ENCODE measurements at regions of chr4 and their contacts with region 1.

Region 1: DNA sequence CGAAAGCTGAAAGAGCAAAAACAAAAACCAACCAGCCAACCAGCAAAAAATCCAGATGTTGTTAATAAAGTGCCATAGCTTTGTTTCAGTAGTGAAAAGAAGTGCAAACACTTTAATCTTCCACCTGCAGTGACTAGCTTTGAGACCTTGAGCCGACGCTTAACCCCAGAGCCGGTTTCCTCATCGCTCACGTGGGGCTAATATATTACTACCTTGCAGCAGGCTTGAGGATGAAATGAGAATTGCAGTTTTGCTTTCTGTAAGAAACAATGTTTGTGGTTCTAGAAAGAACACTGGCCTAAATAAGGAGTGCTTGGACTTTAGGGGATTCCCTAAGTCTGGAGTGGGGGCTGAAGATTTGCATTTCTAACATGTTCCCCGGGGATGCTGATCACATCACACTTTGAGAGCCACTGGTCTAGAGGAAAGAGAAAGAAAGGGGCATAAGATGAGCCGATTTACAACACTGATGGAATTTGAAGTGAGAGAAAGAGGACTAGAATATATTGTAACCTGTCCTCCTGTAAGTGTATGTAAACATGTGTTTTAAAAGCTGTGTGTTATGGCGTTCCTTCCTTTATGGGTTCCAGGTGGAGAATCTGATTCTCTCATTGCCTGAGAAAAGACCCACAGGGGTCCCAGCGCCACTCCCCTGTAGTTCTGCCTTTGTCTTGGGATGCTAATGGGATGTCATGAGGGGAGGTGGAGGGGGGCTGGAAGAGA is 1.4 kb downstream of the FGF2 start:
- DNase-seq: no peak
- ATAC-seq: peak; percentile 20 to 67 (median 42)
- H3K4me3 ChIP-seq: peak overlapping the region; percentile 74 to 87 (median 80)
- H3K27ac ChIP-seq: peak overlapping the region in 9 of 10 donors; percentile 72 to 89 (median 83)
- H3K4me1 ChIP-seq: peaks cover 0 to 27% (median 11%) of the 10 kb centered on the region in 9 donors
- H3K27me3 ChIP-seq: peaks cover 0 to 66% (median 0%) of the 10 kb centered on the region in 7 donors
- CTCF ChIP-seq: peak in 3 of 9 donors; percentile 6 to 22 (median 17)

Region 2: DNA sequence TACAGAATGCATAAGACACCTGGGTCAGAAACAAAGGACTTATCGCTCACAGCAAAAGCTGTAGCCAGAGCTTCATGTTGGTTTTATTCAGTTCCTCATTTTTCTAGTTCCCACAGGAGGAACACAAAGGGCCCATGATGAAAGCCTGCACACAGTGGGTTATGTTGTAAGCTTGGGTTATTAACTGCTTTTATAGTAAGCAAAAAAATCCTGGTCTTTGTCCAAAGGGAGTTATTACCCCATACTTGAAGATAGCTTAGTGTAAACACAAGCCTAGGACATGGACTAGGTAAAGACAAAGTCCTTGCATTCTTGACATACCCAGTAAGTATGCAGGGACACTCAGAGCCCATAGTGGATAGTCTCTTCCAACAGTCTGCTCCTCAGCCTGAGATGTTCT is 83.8 kb before region 1 on chr4:
- intact Hi-C with region 1: loop called in 1 of 10 experiments (anchors 10 kb)
- DNase-seq: no peak
- ATAC-seq: peak in 2 of 8 donors; percentile 33 to 34
- H3K4me3 ChIP-seq: no peak overlapping the region
- H3K27ac ChIP-seq: no peak overlapping the region
- H3K4me1 ChIP-seq: peaks cover 0 to 36% (median 0%) of the 10 kb centered on the region in 9 donors
- H3K27me3 ChIP-seq: no peaks in the 10 kb centered on the region
- CTCF ChIP-seq: no peak

Region 3: GRCh38 chr4:122764821-122765215 is 63.2 kb before region 1 on chr4:
- intact Hi-C with region 1: loop called in 4 of 10 experiments (anchors 5 to 10 kb)
- DNase-seq: no peak
- ATAC-seq: no peak
- H3K4me3 ChIP-seq: no peak overlapping the region
- H3K27ac ChIP-seq: peak overlapping the region in 1 of 10 donors; percentile 0
- H3K4me1 ChIP-seq: peaks cover 0 to 24% (median 15%) of the 10 kb centered on the region in 9 donors
- H3K27me3 ChIP-seq: no peaks in the 10 kb centered on the region
- CTCF ChIP-seq: no peak

Region 4: GRCh38 chr4:122890142-122890769 is 62.2 kb after region 1 on chr4:
- intact Hi-C with region 1: loop called in 1 of 10 experiments (anchors 5 kb)
- DNase-seq: no peak
- ATAC-seq: peak in 2 of 8 donors; percentile 24 to 31
- H3K4me3 ChIP-seq: no peak overlapping the region
- H3K27ac ChIP-seq: peak overlapping the region in 6 of 10 donors; percentile 13 to 54 (median 30)
- H3K4me1 ChIP-seq: peaks cover 0 to 13% (median 2%) of the 10 kb centered on the region in 9 donors
- H3K27me3 ChIP-seq: no peaks in the 10 kb centered on the region
- CTCF ChIP-seq: no peak

Region 5: DNA sequence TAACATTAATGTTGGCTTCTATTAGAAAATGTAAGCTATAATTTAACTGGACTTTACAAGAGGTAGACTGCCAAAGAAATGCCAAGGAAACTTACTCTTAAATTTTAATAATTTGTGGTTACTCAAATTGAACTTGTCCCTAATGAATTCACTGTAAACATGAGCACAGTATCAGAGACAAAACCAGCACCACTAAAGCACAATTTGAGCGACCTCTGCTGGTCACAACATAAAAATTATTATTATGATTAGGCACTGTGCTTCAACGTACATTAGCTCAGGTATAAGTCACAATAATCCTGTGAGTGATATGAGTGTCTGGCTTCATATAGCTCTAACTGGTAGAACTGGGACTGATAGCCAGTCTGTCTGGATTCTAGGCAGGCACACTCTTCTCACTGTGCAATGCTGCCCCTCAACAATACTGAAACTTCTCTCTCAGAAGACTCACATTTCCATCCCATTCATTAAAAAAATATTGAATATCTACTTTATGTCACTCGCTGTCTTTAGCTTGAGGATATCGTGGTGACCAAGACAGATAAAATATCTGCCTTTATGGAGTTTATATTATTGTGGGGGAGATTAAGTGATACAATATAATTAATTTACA is 86.4 kb after region 1 on chr4:
- intact Hi-C with region 1: loop called in 2 of 10 experiments (anchors 5 to 10 kb)
- DNase-seq: no peak
- ATAC-seq: peak in 6 of 8 donors; percentile 55 to 73 (median 56)
- H3K4me3 ChIP-seq: no peak overlapping the region
- H3K27ac ChIP-seq: no peak overlapping the region
- H3K4me1 ChIP-seq: no peaks in the 10 kb centered on the region
- H3K27me3 ChIP-seq: no peaks in the 10 kb centered on the region
- CTCF ChIP-seq: peak in 7 of 9 donors; percentile 12 to 57 (median 52)

Region 6: GRCh38 chr4:122922877-122923511 is 95.0 kb after region 1 on chr4:
- intact Hi-C with region 1: loop called in 3 of 10 experiments (anchors 5 to 10 kb)
- DNase-seq: peak; percentile 82 to 86
- ATAC-seq: peak; percentile 96 to 99 (median 98)
- H3K4me3 ChIP-seq: peak overlapping the region; percentile 64 to 95 (median 92)
- H3K27ac ChIP-seq: peak overlapping the region in 9 of 10 donors; percentile 69 to 90 (median 82)
- H3K4me1 ChIP-seq: peaks cover 0 to 25% (median 17%) of the 10 kb centered on the region in 9 donors
- H3K27me3 ChIP-seq: no peaks in the 10 kb centered on the region
- CTCF ChIP-seq: peak in 1 of 9 donors; percentile 12

Region 7: DNA sequence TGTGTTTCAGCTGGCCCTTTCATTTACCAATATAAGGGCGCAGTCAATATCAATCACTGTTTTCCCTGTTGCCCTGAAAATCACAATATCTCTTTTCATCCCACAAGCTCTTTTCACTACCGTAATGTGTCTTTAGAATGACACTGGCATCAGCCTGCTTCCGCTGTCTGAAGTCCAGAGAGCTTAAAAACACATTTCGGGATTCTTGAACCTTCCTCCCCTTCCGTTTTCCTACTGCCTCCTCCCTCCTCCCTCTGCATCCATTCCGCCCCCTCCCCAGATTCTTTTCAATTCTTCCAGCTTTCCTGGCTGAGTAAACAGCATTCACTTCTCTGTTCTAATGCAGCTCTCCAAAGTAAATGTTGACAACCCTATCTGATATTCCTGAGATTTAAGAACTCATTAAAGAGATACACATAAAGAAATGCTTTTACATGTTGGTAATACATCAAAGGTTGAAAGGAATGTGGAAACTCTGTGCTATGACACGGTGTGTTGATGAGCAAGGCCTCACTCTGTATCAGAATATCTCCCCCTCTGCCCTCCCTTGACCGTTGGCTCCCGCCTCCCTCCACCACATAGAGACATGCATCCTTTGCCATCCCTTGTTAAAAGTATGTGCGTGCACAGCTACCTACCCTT is 485.0 kb after region 1 on chr4:
- intact Hi-C with region 1: no loop called
- DNase-seq: no peak
- ATAC-seq: no peak
- H3K4me3 ChIP-seq: no peak overlapping the region
- H3K27ac ChIP-seq: no peak overlapping the region
- H3K4me1 ChIP-seq: no peaks in the 10 kb centered on the region
- H3K27me3 ChIP-seq: no peaks in the 10 kb centered on the region
- CTCF ChIP-seq: no peak